ENCODE measurements at regions of chr6 and their contacts with region 1.

Region 1: DNA sequence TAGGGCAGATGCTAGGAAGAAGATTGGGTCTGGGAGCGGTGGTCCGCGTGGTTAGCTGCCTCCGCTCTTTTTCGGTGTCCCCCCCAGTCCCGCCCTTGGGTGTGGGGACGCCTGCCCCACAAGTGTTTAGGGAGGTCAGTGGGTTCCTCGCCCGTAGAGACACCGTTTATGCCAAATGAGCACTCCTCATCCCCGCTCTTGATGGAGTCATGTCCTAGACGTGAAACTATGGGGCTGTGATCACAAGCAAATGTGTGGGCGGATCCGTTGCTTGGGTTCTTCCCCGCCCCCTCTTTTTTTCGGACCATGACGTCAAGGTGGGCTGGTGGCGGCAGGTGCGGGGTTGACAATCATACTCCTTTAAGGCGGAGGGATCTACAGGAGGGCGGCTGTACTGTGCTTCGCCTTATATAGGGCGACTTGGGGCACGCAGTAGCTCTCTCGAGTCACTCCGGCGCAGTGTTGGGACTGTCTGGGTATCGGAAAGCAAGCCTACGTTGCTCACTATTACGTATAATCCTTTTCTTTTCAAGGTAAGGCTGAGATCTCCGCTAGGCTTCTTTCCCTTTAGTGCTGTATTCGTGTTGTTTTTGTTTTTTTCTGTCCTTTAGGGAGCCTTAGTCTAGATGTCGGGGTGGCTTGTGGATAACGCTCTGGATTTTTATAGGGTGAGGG is at the start of gene HSP90AB1:
- DNase-seq: peak; percentile 90
- ATAC-seq: peak; percentile 84
- H3K4me3 Mint-ChIP-seq: peak within 1 kb of the TSS; percentile 99
- H3K27ac Mint-ChIP-seq: peak within 1 kb of the TSS; percentile 99
- H3K4me1 Mint-ChIP-seq: peaks cover 45% of the 10 kb centered on the region
- H3K27me3 Mint-ChIP-seq: peaks cover 7% of the 10 kb centered on the region
- total RNA-seq, gene HSP90AB1: 453 to 466 TPM

Region 2: DNA sequence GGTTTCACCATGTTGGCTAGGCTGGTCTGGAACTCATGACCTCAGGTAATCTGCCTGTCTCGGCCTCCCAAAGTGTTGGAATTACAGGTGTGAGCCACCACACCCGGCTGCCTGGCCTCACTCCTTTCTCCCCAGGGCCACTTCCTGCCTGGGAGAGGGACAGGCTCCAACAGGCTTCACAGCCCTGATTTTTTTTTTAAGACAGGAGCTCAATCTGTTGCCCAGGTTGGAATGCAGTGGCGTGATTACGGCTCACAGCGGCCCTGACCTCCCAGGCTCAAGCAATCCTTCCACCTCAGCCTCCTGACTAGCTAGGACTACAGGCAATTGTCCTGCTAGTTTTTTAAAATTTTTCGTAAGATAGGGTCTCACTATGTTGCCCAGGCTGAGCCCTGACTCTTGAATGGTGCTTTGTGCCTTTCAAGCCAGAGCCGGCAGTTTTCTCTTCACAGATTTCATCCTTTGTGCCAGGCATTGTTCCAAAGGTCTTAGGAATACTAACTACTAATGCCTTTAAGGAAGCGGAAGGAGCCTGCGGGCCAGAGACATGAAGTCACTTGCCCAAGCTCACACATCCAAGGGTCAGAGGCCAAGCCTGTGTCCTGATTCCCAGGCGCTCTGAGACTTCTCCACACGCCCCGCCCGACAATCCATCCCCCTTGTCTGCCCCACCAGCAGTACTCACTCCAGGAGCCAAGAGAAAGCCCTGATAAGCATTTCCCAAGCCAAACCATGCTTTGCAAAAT is 68.9 kb before region 1 on chr6:
- POLR2A ChIA-PET with region 1: interaction called, 16 read pairs
- DNase-seq: no peak
- ATAC-seq: no peak
- H3K4me3 Mint-ChIP-seq: peak overlapping the region; percentile 74
- H3K27ac Mint-ChIP-seq: no peak overlapping the region
- H3K4me1 Mint-ChIP-seq: peaks cover 12% of the 10 kb centered on the region
- H3K27me3 Mint-ChIP-seq: peaks cover 14% of the 10 kb centered on the region

Region 3: GRCh38 chr6:44221291-44221960 is 25.4 kb before region 1 on chr6:
- POLR2A ChIA-PET with region 1: interaction called, 44 read pairs
- DNase-seq: peak; percentile 80
- ATAC-seq: peak; percentile 65
- H3K4me3 Mint-ChIP-seq: no peak overlapping the region
- H3K27ac Mint-ChIP-seq: peak overlapping the region; percentile 12
- H3K4me1 Mint-ChIP-seq: peaks cover 37% of the 10 kb centered on the region
- H3K27me3 Mint-ChIP-seq: peaks cover 11% of the 10 kb centered on the region

Region 4: GRCh38 chr6:44257025-44257752 is 10.4 kb after region 1 on chr6 and contains the start of gene SLC35B2:
- POLR2A ChIA-PET with region 1: interaction called, 111 read pairs
- DNase-seq: peak; percentile 85
- ATAC-seq: peak; percentile 76
- H3K4me3 Mint-ChIP-seq: peak within 1 kb of the TSS; percentile 91
- H3K27ac Mint-ChIP-seq: peak within 1 kb of the TSS; percentile 92
- H3K4me1 Mint-ChIP-seq: peaks cover 46% of the 10 kb centered on the region
- H3K27me3 Mint-ChIP-seq: no peaks in the 10 kb centered on the region
- total RNA-seq, gene SLC35B2: 28.4 TPM

Region 5: DNA sequence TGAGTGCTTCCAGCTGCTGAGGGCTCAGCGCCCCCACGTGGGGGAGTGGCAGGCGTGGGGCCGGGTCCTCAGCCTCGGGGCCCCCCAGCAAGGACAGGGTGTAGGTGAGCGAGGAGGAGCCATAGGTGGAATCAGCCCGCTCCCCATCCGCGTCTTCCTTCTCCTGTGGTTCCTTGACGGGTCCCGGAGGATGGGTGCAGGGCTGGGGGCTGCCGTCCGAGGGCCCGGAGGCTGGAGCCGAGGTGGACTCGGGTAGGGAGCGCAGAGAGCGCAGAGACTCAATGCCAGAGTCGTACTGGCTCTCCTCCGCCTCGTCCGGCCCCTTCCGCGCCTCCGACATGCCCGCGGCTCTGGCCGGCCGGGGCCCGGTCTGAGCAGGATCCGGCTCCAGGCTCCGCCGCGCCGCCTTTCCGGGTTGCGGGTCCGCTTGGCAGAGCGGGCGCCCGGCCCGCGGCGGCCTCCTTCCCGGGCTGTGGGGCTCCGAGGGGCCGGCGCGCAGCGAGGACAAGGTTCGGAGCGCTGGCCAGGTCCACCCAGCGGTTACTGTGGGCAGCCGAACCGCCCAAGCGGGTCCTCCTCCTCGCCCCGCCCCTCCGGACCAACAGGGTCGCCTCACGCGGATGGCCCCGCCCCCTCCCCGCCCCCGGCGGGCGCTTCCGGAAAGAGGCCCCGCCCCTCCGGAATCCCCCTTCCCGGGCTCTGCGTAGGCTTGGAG is 18.4 kb after region 1 on chr6 and contains the start of gene NFKBIE:
- POLR2A ChIA-PET with region 1: interaction called, 30 read pairs
- DNase-seq: peak; percentile 95
- ATAC-seq: peak; percentile 69
- H3K4me3 Mint-ChIP-seq: peak within 1 kb of the TSS; percentile 99
- H3K27ac Mint-ChIP-seq: peak within 1 kb of the TSS; percentile 98
- H3K4me1 Mint-ChIP-seq: peaks cover 54% of the 10 kb centered on the region
- H3K27me3 Mint-ChIP-seq: peaks cover 22% of the 10 kb centered on the region
- total RNA-seq, gene NFKBIE: 14.0 to 14.3 TPM

Measured in activated naive CD8-positive, alpha-beta T cell treated with anti-CD3 and anti-CD28 coated beads, Interleukin-2, amount 10 ng/mL, durations not matched to agents 7 days and 5 days (primary cell).